PC-3 (cell line): ENCODE measurements at regions of chrX and their contacts with region 1.

Region 1: GRCh38 chrX:15299941-15300851 is 15.2 kb downstream of the ASB11 start:
- DNase-seq: peak; percentile 58
- ATAC-seq: no peak; the same call in 1 of the 2 replicates
- H3K4me3 ChIP-seq: no peak overlapping the region
- H3K27ac ChIP-seq: no peak overlapping the region
- H3K4me1 ChIP-seq: no peaks in the 10 kb centered on the region
- H3K27me3 ChIP-seq: no peaks in the 10 kb centered on the region
- CTCF ChIP-seq: peak; percentile 71

Region 2: DNA sequence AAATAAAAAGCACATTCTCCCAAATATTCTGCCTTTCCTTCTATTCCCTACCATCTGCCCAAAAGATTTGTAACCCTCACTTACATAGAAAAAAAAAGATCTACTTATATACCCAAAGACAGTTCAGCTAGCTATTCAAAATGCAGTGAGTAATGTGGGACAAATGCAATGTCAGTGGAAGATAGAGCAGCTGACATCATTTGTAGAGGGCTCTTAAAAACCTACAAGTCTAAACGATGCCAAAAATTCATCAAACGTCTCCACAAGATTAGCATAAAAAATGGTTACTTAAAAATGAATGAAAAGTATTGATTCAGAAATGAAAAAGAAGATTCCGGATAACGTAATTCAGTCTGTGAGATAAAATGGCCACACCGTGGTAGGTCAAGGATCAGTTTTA is 126.8 kb before region 1 on chrX:
- CTCF ChIA-PET with region 1: no interaction called
- POLR2A ChIA-PET with region 1: no interaction called
- intact Hi-C with region 1: no loop called
- DNase-seq: no peak
- ATAC-seq: no peak
- H3K4me3 ChIP-seq: no peak overlapping the region
- H3K27ac ChIP-seq: no peak overlapping the region
- H3K4me1 ChIP-seq: peaks cover 8% of the 10 kb centered on the region
- H3K27me3 ChIP-seq: no peaks in the 10 kb centered on the region
- CTCF ChIP-seq: no peak

Region 3: GRCh38 chrX:15349046-15349445 is 48.9 kb after region 1 on chrX:
- CTCF ChIA-PET with region 1: interaction called, 4 read pairs
- POLR2A ChIA-PET with region 1: no interaction called
- intact Hi-C with region 1: loop called (anchors 2 kb)
- DNase-seq: peak; percentile 83
- ATAC-seq: peak; percentile 81
- H3K4me3 ChIP-seq: no peak overlapping the region
- H3K27ac ChIP-seq: no peak overlapping the region
- H3K4me1 ChIP-seq: no peaks in the 10 kb centered on the region
- H3K27me3 ChIP-seq: no peaks in the 10 kb centered on the region
- CTCF ChIP-seq: peak; percentile 69